ENCODE measurements at regions of chr2 and their contacts with region 1.

Region 1: DNA sequence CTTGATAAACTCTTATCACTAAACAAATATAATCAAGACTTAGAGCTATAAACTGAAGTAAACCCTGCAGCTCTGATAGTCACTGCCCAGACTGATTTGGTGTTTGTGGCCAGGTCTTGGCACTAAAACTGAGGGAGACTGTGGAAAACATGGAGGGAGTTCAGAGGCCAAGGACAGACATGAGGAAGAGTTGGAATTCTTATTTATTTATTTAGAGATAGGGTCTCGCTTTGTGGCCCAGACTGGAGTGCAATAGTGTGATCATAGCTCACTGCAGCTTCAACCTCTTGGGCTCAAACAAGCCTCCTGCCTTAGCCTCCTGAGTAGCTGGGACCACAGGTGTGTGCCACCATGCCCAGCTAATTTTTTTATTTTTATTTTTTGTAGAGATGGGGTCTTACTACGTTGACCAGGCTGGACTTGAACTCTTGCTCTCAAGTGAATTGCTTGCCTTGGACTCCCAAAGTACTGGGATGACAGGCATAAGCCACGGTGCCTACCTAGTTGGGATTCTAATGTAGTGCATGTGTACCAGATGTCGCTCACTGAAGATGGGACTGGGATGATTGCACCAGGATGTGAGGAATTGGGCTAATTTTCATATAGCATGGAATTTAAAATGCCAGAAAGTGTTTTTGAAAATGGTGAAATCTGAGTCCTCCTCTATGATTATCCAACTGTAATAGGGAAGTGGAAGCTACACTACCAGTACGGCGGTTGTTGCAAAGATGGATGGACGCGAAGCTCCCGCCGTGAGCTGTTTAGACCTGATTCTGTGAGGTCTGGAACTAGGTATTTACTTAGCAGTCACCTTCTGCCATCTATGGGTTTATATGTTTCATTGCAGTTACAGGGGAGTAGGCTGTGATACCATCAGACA is 52.7 kb upstream of the CTLA4 start:
- DNase-seq: peak; percentile 88
- ATAC-seq: peak; percentile 68
- H3K4me3 ChIP-seq: peak overlapping the region in 1 of 3 experiments; percentile 34; a peak in 1 of 6 replicates
- H3K27ac ChIP-seq: peak overlapping the region; percentile 85
- H3K4me1 ChIP-seq: peaks cover 86% of the 10 kb centered on the region
- H3K27me3 ChIP-seq: no peaks in the 10 kb centered on the region
- CTCF ChIP-seq: peak; percentile 95
- EP300 ChIP-seq: peak in 1 of 2 experiments; percentile 59; a peak in 2 of 4 replicates
- POLR2A ChIP-seq: no peak
- RAD21 ChIP-seq: peak; percentile 94

Region 2: DNA sequence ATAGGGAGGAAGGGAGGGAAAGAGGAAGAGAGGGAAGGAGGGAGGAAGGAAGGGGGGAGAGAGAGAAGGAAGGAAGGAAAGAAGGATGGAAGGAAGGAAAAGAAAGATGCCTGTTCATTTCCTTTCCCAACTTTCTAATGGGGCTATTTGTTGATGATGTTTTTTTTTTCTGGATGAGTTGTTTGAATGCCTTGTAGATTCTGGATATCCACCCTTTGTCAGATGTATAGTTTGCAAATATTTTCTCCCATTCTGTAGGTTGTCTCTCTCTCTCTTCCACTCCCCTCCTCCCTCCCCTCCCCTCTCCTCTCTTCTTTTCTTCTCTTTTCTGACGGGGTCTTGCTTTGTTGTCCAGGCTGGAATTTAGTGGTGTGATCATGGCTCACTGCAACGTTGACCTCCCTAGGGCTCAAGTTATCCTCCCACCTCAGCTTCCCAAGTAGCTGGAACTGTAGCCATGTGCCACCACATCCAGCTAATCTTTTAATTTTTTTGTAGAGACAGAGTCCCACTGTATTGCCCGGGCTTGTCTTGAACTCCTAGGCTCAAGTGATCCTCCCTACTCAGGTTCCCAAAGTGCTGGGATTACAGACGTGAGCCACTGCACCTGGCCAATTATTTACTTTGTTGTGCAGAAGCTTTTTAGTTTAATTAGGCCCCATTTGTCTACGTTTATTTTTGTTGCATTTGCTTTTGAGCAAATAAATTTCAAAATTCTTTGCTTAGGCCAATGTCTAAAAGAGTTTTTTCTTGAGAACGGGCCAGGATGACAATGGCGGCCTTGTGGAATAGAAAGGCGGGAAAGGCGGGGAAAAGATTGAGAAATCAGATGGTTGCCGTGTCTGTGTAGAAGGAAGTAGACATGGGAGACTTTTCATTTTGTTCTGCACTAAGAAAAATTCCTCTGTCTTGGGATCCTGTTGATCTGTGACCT is 1237.4 kb before region 1 on chr2:
- CTCF ChIA-PET with region 1: no interaction called
- POLR2A ChIA-PET with region 1: no interaction called
- in situ Hi-C with region 1: loop called (anchors 25 kb)
- intact Hi-C with region 1: loop called (anchors 10 kb)
- DNase-seq: peak; percentile 62
- ATAC-seq: peak; percentile 70
- H3K4me3 ChIP-seq: peak overlapping the region in 2 of 3 experiments; percentile 9 to 51; a peak in 1 of 6 replicates
- H3K27ac ChIP-seq: peak overlapping the region; percentile 77
- H3K4me1 ChIP-seq: peaks cover 31% of the 10 kb centered on the region
- H3K27me3 ChIP-seq: no peaks in the 10 kb centered on the region
- CTCF ChIP-seq: no peak
- EP300 ChIP-seq: peak in 1 of 2 experiments; percentile 33; a peak in 1 of 4 replicates
- POLR2A ChIP-seq: no peak
- RAD21 ChIP-seq: 0 out of 2 replicates have a peak, but pooled peaks have one; percentile 16

Region 3: DNA sequence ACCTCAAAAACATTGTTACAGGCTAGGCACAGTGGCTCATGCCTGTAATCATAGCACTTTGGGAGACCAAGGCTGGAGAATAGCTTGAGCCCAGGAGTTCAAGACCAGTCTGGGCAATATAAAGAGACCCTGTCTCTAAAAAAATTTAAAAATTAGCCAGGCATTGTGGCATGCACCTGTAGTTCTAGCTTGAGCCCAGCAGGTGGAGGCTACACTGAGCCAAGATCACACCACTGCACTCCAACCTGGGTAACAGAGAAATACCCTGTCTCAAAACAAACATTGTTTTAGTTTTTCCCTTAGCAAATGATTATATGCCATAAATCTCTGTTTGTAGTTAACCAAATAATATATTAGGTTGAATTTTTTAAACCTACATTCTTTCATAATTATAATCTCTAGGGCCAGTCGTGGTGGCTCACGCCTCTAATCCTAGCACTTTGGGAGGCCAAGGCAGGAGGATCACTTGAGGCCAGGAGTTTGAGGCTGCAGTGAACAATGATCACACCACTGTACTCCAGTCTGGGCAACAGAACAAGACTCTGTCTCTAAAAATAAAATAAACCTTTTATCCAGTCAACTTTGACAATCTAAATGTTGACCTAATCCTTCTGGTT is 589.4 kb before region 1 on chr2:
- CTCF ChIA-PET with region 1: interaction called, 4 read pairs
- POLR2A ChIA-PET with region 1: no interaction called
- in situ Hi-C with region 1: no loop called
- intact Hi-C with region 1: loop called (anchors 5 kb)
- DNase-seq: peak; percentile 35
- ATAC-seq: peak; percentile 90
- H3K4me3 ChIP-seq: no peak overlapping the region
- H3K27ac ChIP-seq: no peak overlapping the region
- H3K4me1 ChIP-seq: peaks cover 27% of the 10 kb centered on the region
- H3K27me3 ChIP-seq: no peaks in the 10 kb centered on the region
- CTCF ChIP-seq: peak; percentile 75
- EP300 ChIP-seq: no peak
- POLR2A ChIP-seq: no peak
- RAD21 ChIP-seq: peak; percentile 70

Region 4: DNA sequence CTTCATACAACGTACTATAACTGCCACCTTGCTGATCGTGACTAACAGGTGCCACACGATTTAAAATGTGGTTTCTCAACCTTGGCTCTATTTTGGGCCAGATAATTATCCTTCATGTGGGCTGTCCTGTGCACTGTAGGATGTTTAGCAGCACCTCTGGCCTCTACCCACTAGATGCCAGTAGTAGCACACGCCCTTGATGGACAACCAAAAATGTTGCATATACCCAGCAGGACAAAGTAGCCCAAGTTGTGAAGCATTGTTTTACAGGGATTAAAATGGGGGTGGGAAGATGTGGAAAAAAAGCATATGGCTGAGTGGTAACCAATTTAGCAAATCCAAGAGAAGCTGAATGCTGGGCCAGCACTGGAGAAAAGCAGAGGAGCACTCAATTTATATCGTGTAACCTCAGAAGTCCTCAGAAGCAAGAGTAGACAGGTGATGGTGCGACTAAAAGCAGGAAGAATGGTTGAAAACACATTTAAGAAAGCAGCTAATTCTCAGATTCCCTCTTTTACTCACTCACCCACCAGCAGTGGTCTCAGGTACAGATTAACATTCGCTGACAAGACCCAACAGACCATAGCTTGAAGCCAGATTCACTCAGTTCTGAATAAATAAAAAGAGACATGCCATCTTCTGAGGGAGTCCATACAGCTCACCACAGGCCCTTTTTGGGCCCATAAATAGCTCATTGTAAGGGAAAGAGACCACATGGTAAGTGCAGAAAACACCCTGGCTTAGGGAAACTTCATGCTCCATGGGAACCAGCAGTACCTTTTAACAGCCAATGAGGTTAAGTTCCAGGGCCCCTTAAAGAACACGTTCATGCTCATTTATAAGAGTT is 330.4 kb before region 1 on chr2:
- CTCF ChIA-PET with region 1: interaction called, 17 read pairs
- POLR2A ChIA-PET with region 1: no interaction called
- in situ Hi-C with region 1: loop called (anchors 5 kb)
- intact Hi-C with region 1: loop called (anchors 1 kb)
- DNase-seq: peak; percentile 46
- ATAC-seq: peak; percentile 94
- H3K4me3 ChIP-seq: no peak overlapping the region
- H3K27ac ChIP-seq: no peak overlapping the region
- H3K4me1 ChIP-seq: 0 out of 2 replicates have a peak, but pooled peaks cover under 1% of the 10 kb centered on the region
- H3K27me3 ChIP-seq: no peaks in the 10 kb centered on the region
- CTCF ChIP-seq: peak; percentile 77
- EP300 ChIP-seq: no peak
- POLR2A ChIP-seq: no peak
- RAD21 ChIP-seq: peak; percentile 83

Region 5: GRCh38 chr2:203688798-203689197 is 126.1 kb before region 1 on chr2:
- CTCF ChIA-PET with region 1: no interaction called
- POLR2A ChIA-PET with region 1: interaction called, 5 read pairs
- in situ Hi-C with region 1: no loop called
- intact Hi-C with region 1: loop called (anchors 5 kb)
- DNase-seq: no peak
- ATAC-seq: peak; percentile 53
- H3K4me3 ChIP-seq: no peak overlapping the region
- H3K27ac ChIP-seq: no peak overlapping the region
- H3K4me1 ChIP-seq: peaks cover 63% of the 10 kb centered on the region
- H3K27me3 ChIP-seq: no peaks in the 10 kb centered on the region
- CTCF ChIP-seq: no peak
- EP300 ChIP-seq: no peak
- POLR2A ChIP-seq: no peak
- RAD21 ChIP-seq: no peak

Region 6: GRCh38 chr2:203909261-203909967 is 94.5 kb after region 1 on chr2:
- CTCF ChIA-PET with region 1: interaction called, 4 read pairs
- POLR2A ChIA-PET with region 1: interaction called, 3 read pairs
- in situ Hi-C with region 1: no loop called
- intact Hi-C with region 1: loop called (anchors 5 kb)
- DNase-seq: peak; percentile 41
- ATAC-seq: peak; percentile 92
- H3K4me3 ChIP-seq: peak overlapping the region in 1 of 3 experiments; percentile 9; a peak in 2 of 6 replicates
- H3K27ac ChIP-seq: no peak overlapping the region
- H3K4me1 ChIP-seq: peaks cover 20% of the 10 kb centered on the region; the same call in 1 of the 2 replicates
- H3K27me3 ChIP-seq: no peaks in the 10 kb centered on the region
- CTCF ChIP-seq: peak; percentile 74
- EP300 ChIP-seq: no peak
- POLR2A ChIP-seq: no peak
- RAD21 ChIP-seq: peak; percentile 75; the same call in 1 of the 2 replicates